CD8-positive, alpha-beta T cell (primary cell): ENCODE measurements at regions of chr17 and their contacts with region 1.

Region 1: GRCh38 chr17:1915889-1916288 is 86.1 kb downstream of the RPA1 start:
- DNase-seq: no peak
- ATAC-seq: no peak
- H3K4me3 ChIP-seq: no peak overlapping the region
- H3K4me3 Mint-ChIP-seq: no peak overlapping the region
- H3K27ac ChIP-seq: no peak overlapping the region
- H3K27ac Mint-ChIP-seq: no peak overlapping the region
- H3K4me1 ChIP-seq: no peaks in the 10 kb centered on the region
- H3K4me1 Mint-ChIP-seq: no peaks in the 10 kb centered on the region
- H3K27me3 ChIP-seq: peaks cover 2% of the 10 kb centered on the region in 2 experiments
- H3K27me3 Mint-ChIP-seq: peaks cover 19% of the 10 kb centered on the region
- CTCF ChIP-seq: no peak

Region 2: GRCh38 chr17:1431631-1432104 is 484.2 kb before region 1 on chr17:
- CTCF ChIA-PET with region 1: no interaction called
- POLR2A ChIA-PET with region 1: no interaction called
- intact Hi-C with region 1: loop called in 1 of 2 experiments (anchors 5 kb)
- DNase-seq: no peak
- ATAC-seq: no peak
- H3K4me3 ChIP-seq: no peak overlapping the region
- H3K4me3 Mint-ChIP-seq: no peak overlapping the region
- H3K27ac ChIP-seq: no peak overlapping the region
- H3K27ac Mint-ChIP-seq: peak overlapping the region; percentile 29
- H3K4me1 ChIP-seq: no peaks in the 10 kb centered on the region
- H3K4me1 Mint-ChIP-seq: peaks cover 29% of the 10 kb centered on the region
- H3K27me3 ChIP-seq: no peaks in the 10 kb centered on the region
- H3K27me3 Mint-ChIP-seq: no peaks in the 10 kb centered on the region
- CTCF ChIP-seq: no peak

Region 3: GRCh38 chr17:1989135-1989534 is 73.2 kb after region 1 on chr17:
- CTCF ChIA-PET with region 1: no interaction called
- POLR2A ChIA-PET with region 1: no interaction called
- intact Hi-C with region 1: no loop called
- DNase-seq: no peak
- ATAC-seq: no peak
- H3K4me3 ChIP-seq: no peak overlapping the region
- H3K4me3 Mint-ChIP-seq: no peak overlapping the region
- H3K27ac ChIP-seq: no peak overlapping the region
- H3K27ac Mint-ChIP-seq: no peak overlapping the region
- H3K4me1 ChIP-seq: no peaks in the 10 kb centered on the region
- H3K4me1 Mint-ChIP-seq: no peaks in the 10 kb centered on the region
- H3K27me3 ChIP-seq: no peaks in the 10 kb centered on the region
- H3K27me3 Mint-ChIP-seq: peaks cover 2% of the 10 kb centered on the region
- CTCF ChIP-seq: no peak